ENCODE measurements at regions of chr12 and their contacts with region 1.

Region 1: DNA sequence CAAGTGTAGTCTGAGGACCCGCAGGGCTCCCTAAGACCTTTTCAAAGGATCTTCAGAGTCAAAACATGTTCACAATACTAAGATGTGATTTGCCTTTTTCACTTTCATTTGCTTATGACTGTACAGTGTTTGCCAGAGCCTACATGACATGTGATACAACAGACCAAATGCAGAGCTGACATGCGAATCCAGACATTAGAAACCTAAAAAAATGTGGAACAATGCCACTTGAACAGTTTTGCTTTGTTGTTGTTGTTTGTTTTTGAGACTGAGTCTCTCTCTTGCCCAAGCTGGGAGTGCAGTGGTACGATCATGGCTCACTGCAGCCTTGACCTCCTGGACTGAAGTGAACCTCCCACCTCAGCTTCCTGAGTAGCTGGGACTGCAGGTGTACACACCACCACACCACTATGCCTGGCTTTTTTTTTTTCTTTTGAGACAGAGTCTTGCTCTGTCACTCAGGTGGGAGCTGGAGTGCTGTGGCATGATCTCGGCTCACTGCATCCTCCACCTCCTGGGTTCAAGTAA is 5.3 kb upstream of the RAB35 start:
- DNase-seq: no peak
- ATAC-seq: no peak

Region 2: GRCh38 chr12:118398940-118399339 is 1722.9 kb before region 1 on chr12:
- intact Hi-C with region 1: loop called (anchors 5 kb)
- DNase-seq: no peak
- ATAC-seq: no peak

Region 3: GRCh38 chr12:119826661-119827445 is 295.0 kb before region 1 on chr12:
- intact Hi-C with region 1: no loop called
- DNase-seq: no peak
- ATAC-seq: no peak

Region 4: GRCh38 chr12:120181991-120182631 is 60.3 kb after region 1 on chr12:
- intact Hi-C with region 1: no loop called
- DNase-seq: no peak
- ATAC-seq: no peak